PC-3 (cell line): ENCODE measurements at regions of chr6 and their contacts with region 1.

Region 1: DNA sequence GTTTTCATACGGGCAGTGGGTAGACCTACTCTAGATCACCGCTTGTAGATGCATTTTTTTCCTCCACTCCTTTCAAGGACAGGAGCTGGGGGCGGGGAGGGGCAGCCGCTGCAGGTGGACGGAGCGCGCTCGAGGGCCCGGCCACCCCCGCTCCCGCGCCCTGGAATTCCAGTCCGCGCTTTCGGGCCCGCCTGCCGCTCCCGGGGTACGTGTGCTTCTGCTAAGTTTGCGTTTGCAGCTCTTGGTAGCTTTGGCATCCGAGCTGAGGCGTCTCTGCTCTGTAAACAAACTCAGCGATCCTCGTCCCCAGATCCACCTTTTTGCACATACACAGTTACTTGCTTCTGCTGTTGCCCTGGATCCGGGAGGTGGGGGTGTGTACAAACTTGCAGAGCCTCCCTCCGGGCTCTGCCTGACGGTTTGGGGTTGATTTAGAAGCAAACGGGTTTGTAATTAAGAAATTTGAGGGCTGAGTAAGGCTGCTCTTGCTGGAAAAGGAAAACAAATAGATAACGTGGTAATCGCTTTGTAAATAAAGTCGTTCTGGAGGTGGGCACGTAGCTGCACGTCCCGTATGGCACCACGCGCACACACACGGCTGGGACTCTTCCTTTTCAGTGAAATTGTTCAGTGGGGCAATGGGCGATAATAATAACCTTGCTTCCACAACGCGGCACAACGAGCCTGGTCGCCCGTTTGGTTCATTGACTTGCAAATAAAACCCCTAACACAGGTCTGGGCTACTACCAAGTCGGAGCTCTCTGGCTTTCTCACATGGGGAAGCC is 976 bp upstream of the CITED2 start:
- DNase-seq: peak; percentile 90
- ATAC-seq: peak; percentile 70
- H3K4me3 ChIP-seq: peak overlapping the region; percentile 91
- H3K27ac ChIP-seq: peak overlapping the region; percentile 83
- H3K4me1 ChIP-seq: peaks cover 35% of the 10 kb centered on the region
- H3K27me3 ChIP-seq: no peaks in the 10 kb centered on the region
- CTCF ChIP-seq: no peak

Region 2: DNA sequence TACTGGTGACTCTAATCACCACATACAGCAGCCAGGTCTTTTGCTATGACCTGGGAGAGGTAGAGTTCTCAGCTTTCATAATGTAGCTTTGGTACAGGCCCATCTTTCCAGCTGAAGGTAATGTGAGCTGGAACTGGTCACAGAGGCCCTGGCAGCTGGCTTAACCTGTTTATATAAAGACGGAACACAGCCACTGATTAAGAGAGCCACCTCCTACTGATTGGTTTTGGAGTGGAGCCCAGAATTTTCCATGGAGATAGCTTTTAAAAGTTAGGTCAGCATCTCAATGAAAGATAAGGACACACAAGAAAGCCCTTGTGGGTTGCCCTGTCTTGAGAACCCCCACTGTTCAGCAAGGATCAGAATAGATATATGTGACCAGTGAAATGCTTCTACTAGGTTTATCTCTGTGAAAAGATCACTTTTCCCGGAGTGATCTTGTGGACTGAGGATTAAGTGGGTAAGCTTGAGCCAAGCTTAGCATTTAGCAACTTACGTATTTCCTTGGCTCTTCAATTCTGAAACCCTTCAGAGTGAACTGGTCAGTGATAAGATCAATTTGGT is 212.7 kb after region 1 on chr6:
- CTCF ChIA-PET with region 1: no interaction called
- POLR2A ChIA-PET with region 1: no interaction called
- intact Hi-C with region 1: loop called (anchors 5 kb)
- DNase-seq: peak; percentile 61
- ATAC-seq: peak; percentile 73
- H3K4me3 ChIP-seq: no peak overlapping the region
- H3K27ac ChIP-seq: peak overlapping the region; percentile 29
- H3K4me1 ChIP-seq: peaks cover 27% of the 10 kb centered on the region
- H3K27me3 ChIP-seq: no peaks in the 10 kb centered on the region
- CTCF ChIP-seq: no peak

Region 3: GRCh38 chr6:139764498-139764986 is 389.1 kb after region 1 on chr6:
- CTCF ChIA-PET with region 1: interaction called, 3 read pairs
- POLR2A ChIA-PET with region 1: interaction called, 9 read pairs
- intact Hi-C with region 1: loop called (anchors 2 kb)
- DNase-seq: peak; percentile 88
- ATAC-seq: peak; percentile 84
- H3K4me3 ChIP-seq: peak overlapping the region; percentile 43; the same call in 1 of the 2 replicates
- H3K27ac ChIP-seq: peak overlapping the region; percentile 79
- H3K4me1 ChIP-seq: peaks cover 47% of the 10 kb centered on the region
- H3K27me3 ChIP-seq: no peaks in the 10 kb centered on the region
- CTCF ChIP-seq: no peak

Region 4: GRCh38 chr6:139981768-139982181 is 606.4 kb after region 1 on chr6:
- CTCF ChIA-PET with region 1: no interaction called
- POLR2A ChIA-PET with region 1: interaction called, 3 read pairs
- intact Hi-C with region 1: loop called (anchors 1 kb)
- DNase-seq: peak; percentile 74
- ATAC-seq: peak; percentile 84
- H3K4me3 ChIP-seq: peak overlapping the region; percentile 33; the same call in 1 of the 2 replicates
- H3K27ac ChIP-seq: peak overlapping the region; percentile 75
- H3K4me1 ChIP-seq: peaks cover 53% of the 10 kb centered on the region
- H3K27me3 ChIP-seq: no peaks in the 10 kb centered on the region
- CTCF ChIP-seq: no peak

Region 5: DNA sequence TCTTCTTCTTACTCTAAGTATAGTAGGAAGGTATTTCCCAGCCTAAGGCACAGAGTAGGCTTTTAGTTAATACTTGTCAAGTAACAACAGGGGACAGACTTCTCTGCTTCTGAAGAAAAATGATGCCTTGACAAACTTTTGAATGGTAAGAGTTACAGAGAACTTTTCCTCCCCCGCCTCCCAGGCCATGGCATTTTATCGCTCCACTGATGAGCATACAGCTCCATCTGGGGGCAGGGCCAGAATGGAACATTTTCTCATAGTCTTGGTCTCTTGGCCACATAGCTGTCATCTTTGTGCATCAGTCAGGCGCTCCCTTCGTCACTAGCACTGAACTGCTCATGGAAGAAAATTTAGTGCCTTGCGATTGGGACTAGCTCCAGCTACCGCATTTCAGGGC is 1065.8 kb after region 1 on chr6:
- CTCF ChIA-PET with region 1: no interaction called
- POLR2A ChIA-PET with region 1: no interaction called
- intact Hi-C with region 1: loop called (anchors 1 kb)
- DNase-seq: peak; percentile 58
- ATAC-seq: peak; percentile 42; the same call in 1 of the 2 replicates
- H3K4me3 ChIP-seq: no peak overlapping the region
- H3K27ac ChIP-seq: no peak overlapping the region
- H3K4me1 ChIP-seq: peaks cover 9% of the 10 kb centered on the region
- H3K27me3 ChIP-seq: no peaks in the 10 kb centered on the region
- CTCF ChIP-seq: peak; percentile 59; the same call in 1 of the 2 replicates